Upper lobe of right lung (tissue), 1 donor: ENCODE measurements at regions of chr2 and their contacts with region 1.

Region 1: DNA sequence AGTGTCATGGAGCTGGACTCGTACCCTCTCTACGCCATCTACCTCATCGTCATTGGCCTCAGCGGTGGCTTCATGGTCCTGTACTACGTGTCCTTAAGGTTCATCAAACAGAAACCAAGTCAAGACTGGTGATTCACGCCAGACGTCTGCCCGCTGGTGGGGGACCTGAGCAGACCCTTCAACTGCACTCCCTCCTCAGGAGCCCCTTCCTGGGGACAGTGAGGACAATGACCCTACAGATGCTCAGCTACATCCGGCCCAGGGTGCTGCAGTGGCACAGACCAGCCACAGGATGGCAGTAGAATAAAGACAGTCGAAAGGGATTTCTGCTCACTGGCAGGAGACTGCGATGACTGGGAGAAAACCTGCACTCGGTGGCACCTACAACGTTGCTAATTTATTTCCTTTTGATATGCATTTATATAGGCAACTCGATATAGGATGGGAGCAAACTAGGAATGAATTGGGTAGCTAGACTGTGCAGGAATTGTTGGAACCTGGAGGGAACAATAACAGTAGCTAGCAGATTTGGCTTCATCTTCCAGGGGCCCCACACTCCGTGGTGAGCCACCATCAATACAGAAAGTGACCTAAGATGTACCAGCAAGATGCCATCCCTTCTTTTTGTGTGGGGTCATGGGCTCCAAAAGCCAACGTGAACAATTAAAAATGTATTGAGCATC is 39.2 kb downstream of the ABCG8 start:
- DNase-seq: no peak
- ATAC-seq: peak; percentile 89
- H3K4me3 ChIP-seq: no peak overlapping the region
- H3K27ac ChIP-seq: no peak overlapping the region
- H3K4me1 ChIP-seq: peaks cover 16% of the 10 kb centered on the region
- H3K27me3 ChIP-seq: no peaks in the 10 kb centered on the region
- CTCF ChIP-seq: peak; percentile 97

Region 2: DNA sequence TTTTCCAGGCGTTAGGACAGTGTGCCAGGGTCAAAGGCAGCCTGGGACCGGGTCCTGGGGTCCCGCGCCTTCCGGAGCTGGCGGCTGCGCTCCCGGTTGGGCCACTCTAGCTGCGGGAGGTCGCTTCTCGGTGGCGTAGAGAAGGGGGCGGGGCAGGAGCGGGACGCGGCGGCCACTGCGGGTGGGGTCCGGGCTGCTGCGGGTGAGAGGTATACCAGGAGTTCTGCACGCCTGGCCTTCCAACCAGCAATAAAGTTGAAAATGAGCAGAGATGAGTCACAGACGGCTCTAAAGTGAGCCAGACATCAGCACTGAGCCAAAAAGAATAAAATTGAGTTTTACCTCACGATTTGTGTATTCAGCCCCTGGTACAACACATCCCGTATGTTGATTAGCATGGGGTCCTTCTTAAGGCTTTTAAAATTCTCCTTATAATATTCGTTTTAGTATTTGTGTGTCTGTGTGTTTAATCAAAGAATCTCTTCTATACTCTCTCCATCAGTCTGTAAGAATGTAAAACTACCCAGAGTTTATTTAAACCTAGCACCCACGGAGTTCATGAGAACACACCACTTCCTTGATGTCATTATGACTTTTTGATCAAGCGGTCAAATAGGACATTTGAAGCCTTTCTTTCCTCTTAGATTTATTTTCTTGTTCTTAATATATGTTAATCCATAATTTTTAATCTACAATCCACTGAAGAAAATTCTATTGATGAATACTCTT is 201.4 kb before region 1 on chr2 and contains the start of gene C1GALT1C1L:
- intact Hi-C with region 1: no loop called
- DNase-seq: peak; percentile 74
- ATAC-seq: peak; percentile 91
- H3K4me3 ChIP-seq: peak within 1 kb of the TSS; percentile 47
- H3K27ac ChIP-seq: no peak within 1 kb of the TSS
- H3K4me1 ChIP-seq: peaks cover 7% of the 10 kb centered on the region
- H3K27me3 ChIP-seq: no peaks in the 10 kb centered on the region
- CTCF ChIP-seq: no peak
- total RNA-seq, gene C1GALT1C1L: 0.35 TPM

Region 3: DNA sequence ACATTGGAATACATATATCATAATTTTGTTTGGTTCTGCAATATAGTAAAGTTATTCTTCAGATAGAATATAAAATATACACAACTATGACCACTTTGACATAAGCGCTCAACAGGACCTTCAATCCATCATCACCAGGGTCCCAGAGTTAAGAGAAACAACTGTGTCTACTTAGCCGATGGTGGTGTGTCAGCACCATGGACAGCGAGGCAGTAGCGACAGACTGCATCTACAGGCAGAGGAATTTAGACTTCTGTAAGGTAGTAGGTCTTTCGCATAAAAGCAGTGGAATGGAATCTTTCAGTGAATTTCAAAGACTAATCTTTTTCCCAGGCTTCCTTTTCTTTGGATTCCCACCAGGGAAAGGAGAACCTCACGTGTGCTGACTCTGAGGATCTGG is 138.4 kb after region 1 on chr2:
- intact Hi-C with region 1: no loop called
- DNase-seq: no peak
- ATAC-seq: peak; percentile 54
- H3K4me3 ChIP-seq: no peak overlapping the region
- H3K27ac ChIP-seq: no peak overlapping the region
- H3K4me1 ChIP-seq: no peaks in the 10 kb centered on the region
- H3K27me3 ChIP-seq: peaks cover 6% of the 10 kb centered on the region
- CTCF ChIP-seq: no peak

Region 4: DNA sequence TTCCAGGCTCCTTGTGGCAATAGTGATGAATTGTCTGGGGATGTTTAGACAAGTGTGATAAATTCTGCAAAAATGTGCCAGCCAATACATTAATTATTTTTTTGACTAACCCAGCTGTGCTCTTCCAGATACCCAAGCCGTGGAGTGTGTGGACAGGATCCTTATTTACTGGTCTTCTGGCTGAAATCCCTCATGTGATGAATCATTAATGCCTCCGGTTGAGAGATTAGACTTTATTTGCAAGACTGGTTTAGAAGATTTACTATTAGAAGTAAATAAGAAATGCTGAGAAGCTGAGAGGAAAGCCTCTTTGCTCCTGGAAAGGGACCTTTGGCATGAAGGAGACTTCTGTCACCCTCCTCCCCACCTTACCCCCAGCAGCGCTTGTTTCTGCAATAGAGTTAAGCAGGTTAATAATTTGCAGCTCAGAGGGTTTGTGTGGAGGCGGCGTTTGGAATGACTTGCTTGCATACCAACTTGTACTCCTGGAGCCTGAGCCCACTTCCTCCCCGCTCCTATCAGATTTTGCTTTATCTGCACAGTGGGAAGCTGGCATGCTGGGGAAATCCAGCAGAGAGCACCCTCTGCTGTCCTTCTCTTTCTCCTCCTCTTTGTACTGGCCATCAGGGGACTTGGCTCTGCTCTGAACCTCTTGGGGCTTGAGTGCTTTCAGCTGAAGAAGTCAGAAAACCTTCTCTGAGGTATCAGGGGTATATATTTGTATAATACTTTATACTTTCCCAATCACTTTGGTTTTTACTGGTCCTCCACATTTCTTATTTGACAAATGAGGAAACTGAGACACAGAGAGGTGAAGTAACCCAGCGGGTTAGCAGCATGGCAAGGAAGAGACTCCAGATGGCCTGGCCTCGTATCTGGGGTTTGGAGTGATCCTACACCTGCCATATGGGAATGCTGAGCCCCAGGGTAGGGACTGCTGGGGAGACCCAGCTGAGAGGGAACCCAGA is 413.6 kb after region 1 on chr2:
- intact Hi-C with region 1: loop called (anchors 5 kb)
- DNase-seq: peak; percentile 70
- ATAC-seq: peak; percentile 96
- H3K4me3 ChIP-seq: no peak overlapping the region
- H3K27ac ChIP-seq: no peak overlapping the region
- H3K4me1 ChIP-seq: peaks cover 17% of the 10 kb centered on the region
- H3K27me3 ChIP-seq: no peaks in the 10 kb centered on the region
- CTCF ChIP-seq: peak; percentile 55